K562 (cell line): ENCODE measurements at regions of chr11 and their contacts with region 1.

Region 1: DNA sequence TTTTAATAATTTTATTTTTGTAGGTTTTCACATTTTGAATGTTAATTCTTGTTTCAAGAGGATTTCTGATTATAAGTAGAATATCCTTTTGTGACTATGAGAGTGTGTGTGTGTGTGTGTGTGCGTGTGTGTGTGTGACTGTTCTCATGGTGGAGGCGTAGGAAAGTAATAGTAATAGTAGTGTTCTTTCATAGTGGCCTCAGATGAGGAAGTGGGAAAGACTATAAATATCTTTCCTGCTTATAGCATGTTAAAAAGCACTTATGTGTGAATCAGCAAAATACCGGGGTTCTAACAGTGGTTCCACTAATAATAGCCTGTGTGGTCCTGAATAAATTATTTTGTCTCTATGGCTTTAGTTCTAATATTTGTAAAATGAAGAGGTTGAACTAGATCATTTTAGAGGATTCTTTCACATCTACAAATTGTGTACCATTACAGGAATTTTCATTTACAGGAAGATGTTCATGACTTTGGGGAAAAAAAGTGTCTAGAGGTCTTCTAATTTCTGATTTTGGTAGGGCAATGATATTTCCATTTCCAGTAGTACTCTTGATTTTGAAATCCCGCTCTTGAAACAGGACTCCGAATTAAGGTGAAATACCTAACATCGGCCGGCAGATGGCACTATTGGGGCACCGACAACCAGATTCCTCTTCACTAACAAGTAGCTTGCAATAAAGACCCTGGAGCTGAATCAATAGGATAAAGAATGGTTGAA is 29.9 kb upstream of the OR10G7 start:
- DNase-seq: peak; percentile 49 to 87 (median 54)
- ATAC-seq: peak; percentile 28
- H3K4me3 ChIP-seq: no peak overlapping the region
- H3K27ac ChIP-seq: no peak overlapping the region
- H3K4me1 ChIP-seq: peaks cover 11 to 17% of the 10 kb centered on the region in 2 experiments; a peak in 4 of 5 replicates
- H3K27me3 ChIP-seq: peaks cover 4 to 13% of the 10 kb centered on the region in 2 experiments; a peak in 4 of 5 replicates
- CTCF ChIP-seq: peak; percentile 65 to 88 (median 80)
- EP300 ChIP-seq: no peak
- POLR2A ChIP-seq: no peak
- RAD21 ChIP-seq: peak; percentile 92

Region 2: DNA sequence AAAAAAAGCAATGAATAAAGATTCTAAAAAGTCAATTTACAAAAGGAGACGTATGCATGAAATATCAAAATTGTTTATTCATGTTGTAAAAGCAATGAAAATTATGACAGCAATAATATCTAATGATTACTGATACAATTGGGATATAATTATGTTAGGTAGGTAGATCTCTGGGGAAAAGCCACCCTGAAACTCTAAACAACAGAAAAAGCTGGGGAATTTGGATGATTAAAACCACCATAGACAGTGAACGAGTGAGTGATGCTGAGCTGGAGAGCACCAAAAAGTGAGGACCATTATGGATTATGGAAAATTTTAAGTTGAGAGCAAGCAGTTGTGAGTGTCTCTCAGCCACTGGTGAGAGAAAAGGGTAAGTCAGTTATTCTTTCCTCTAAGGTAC is 44.6 kb before region 1 on chr11 and contains the start of gene OR10G8:
- CTCF ChIA-PET with region 1: no interaction called
- POLR2A ChIA-PET with region 1: no interaction called
- in situ Hi-C with region 1: no loop called
- intact Hi-C with region 1: no loop called
- DNase-seq: no peak
- ATAC-seq: no peak
- H3K4me3 ChIP-seq: no peak within 1 kb of the TSS
- H3K27ac ChIP-seq: no peak within 1 kb of the TSS
- H3K4me1 ChIP-seq: no peaks in the 10 kb centered on the region
- H3K27me3 ChIP-seq: peaks cover 0 to 6% of the 10 kb centered on the region in 2 experiments; a peak in 1 of 5 replicates
- CTCF ChIP-seq: no peak
- EP300 ChIP-seq: no peak
- POLR2A ChIP-seq: no peak
- RAD21 ChIP-seq: no peak
- polyA plus RNA-seq, gene OR10G8: not detected

Region 3: GRCh38 chr11:124108156-124108555 is 37.1 kb after region 1 on chr11:
- CTCF ChIA-PET with region 1: interaction called, 5 read pairs
- POLR2A ChIA-PET with region 1: interaction called, 4 read pairs
- in situ Hi-C with region 1: no loop called
- intact Hi-C with region 1: loop called (anchors 2 kb)
- DNase-seq: peak; percentile 29 to 76 (median 46)
- ATAC-seq: peak; percentile 93
- H3K4me3 ChIP-seq: no peak overlapping the region
- H3K27ac ChIP-seq: no peak overlapping the region
- H3K4me1 ChIP-seq: no peaks in the 10 kb centered on the region; a peak in 1 of 5 replicates
- H3K27me3 ChIP-seq: no peaks in the 10 kb centered on the region
- CTCF ChIP-seq: peak; percentile 55 to 65 (median 62)
- EP300 ChIP-seq: 0 out of 2 replicates have a peak, but pooled peaks have one; percentile 15
- POLR2A ChIP-seq: no peak
- RAD21 ChIP-seq: peak; percentile 74 to 90

Region 4: GRCh38 chr11:124159481-124159880 is 88.4 kb after region 1 on chr11:
- CTCF ChIA-PET with region 1: no interaction called
- POLR2A ChIA-PET with region 1: no interaction called
- in situ Hi-C with region 1: no loop called
- intact Hi-C with region 1: no loop called
- DNase-seq: no peak
- ATAC-seq: no peak
- H3K4me3 ChIP-seq: no peak overlapping the region
- H3K27ac ChIP-seq: no peak overlapping the region
- H3K4me1 ChIP-seq: no peaks in the 10 kb centered on the region; a peak in 1 of 5 replicates
- H3K27me3 ChIP-seq: peaks cover 2 to 7% of the 10 kb centered on the region in 2 experiments; a peak in 2 of 5 replicates
- CTCF ChIP-seq: no peak
- EP300 ChIP-seq: no peak
- POLR2A ChIP-seq: no peak
- RAD21 ChIP-seq: no peak

Region 5: GRCh38 chr11:124277804-124278203 is 206.7 kb after region 1 on chr11:
- CTCF ChIA-PET with region 1: no interaction called
- POLR2A ChIA-PET with region 1: interaction called, 4 read pairs
- in situ Hi-C with region 1: no loop called
- intact Hi-C with region 1: loop called (anchors 5 kb)
- DNase-seq: no peak
- ATAC-seq: no peak
- H3K4me3 ChIP-seq: no peak overlapping the region
- H3K27ac ChIP-seq: no peak overlapping the region
- H3K4me1 ChIP-seq: peaks cover 6 to 13% of the 10 kb centered on the region in 2 experiments
- H3K27me3 ChIP-seq: no peaks in the 10 kb centered on the region
- CTCF ChIP-seq: peak in 2 of 3 experiments; percentile 3 to 30; a peak in 2 of 6 replicates
- EP300 ChIP-seq: no peak
- POLR2A ChIP-seq: no peak
- RAD21 ChIP-seq: peak; percentile 6 to 44; a peak in 2 of 4 replicates

Region 6: GRCh38 chr11:124402326-124402922 is 331.3 kb after region 1 on chr11:
- CTCF ChIA-PET with region 1: no interaction called
- POLR2A ChIA-PET with region 1: no interaction called
- in situ Hi-C with region 1: loop called (anchors 10 kb)
- intact Hi-C with region 1: loop called (anchors 5 kb)
- DNase-seq: peak; percentile 58 to 80 (median 64)
- ATAC-seq: peak; percentile 97
- H3K4me3 ChIP-seq: no peak overlapping the region
- H3K27ac ChIP-seq: no peak overlapping the region
- H3K4me1 ChIP-seq: no peaks in the 10 kb centered on the region
- H3K27me3 ChIP-seq: no peaks in the 10 kb centered on the region
- CTCF ChIP-seq: peak; percentile 75 to 79 (median 78)
- EP300 ChIP-seq: no peak
- POLR2A ChIP-seq: no peak
- RAD21 ChIP-seq: peak; percentile 49 to 74

Region 7: GRCh38 chr11:124481365-124482323 is 410.6 kb after region 1 on chr11:
- CTCF ChIA-PET with region 1: no interaction called
- POLR2A ChIA-PET with region 1: no interaction called
- in situ Hi-C with region 1: no loop called
- intact Hi-C with region 1: loop called (anchors 5 kb)
- DNase-seq: peak; percentile 28 to 81 (median 58)
- ATAC-seq: peak; percentile 98
- H3K4me3 ChIP-seq: peak overlapping the region; percentile 34
- H3K27ac ChIP-seq: peak overlapping the region; percentile 79
- H3K4me1 ChIP-seq: peaks cover 5 to 17% of the 10 kb centered on the region in 2 experiments
- H3K27me3 ChIP-seq: no peaks in the 10 kb centered on the region
- CTCF ChIP-seq: 0 out of 6 replicates have a peak, but pooled peaks of 1 of the 3 experiments have one; percentile 4
- EP300 ChIP-seq: no peak
- POLR2A ChIP-seq: peak; percentile 64
- RAD21 ChIP-seq: 0 out of 4 replicates have a peak, but pooled peaks of 1 of the 2 experiments have one; percentile 10

Region 8: DNA sequence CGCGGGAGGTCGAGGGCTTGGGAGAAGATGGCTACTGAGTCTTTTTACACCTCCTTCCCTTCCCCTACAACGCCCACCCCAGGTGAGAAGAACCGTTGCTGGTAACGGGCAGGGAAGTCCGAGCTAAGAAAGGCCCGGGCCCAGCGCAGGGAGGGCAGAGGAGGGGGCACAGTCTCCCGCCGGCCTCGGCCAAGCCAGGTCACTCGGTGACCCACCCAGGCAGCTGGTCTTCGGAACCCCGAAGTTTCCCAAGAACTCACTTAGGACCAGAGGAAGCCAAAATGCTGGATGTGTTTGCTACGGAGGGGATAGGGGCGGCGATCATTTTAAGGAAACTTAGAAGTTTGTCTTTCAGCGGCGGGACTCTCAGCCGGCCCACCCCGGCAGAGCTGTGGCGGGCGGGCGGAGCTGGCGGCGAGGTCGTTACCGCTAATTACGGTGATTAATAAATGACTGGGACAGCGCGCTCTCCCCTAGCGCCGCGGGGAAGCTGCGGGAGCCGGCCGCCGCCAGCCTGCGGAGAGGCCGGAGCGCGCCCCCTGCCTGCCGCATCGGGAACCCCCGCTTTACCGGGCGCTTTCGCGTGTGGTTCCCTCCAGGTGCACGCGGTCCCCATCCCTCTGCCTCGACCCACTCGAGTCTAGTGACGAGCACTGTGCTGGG is 795.0 kb after region 1 on chr11:
- CTCF ChIA-PET with region 1: no interaction called
- POLR2A ChIA-PET with region 1: no interaction called
- in situ Hi-C with region 1: loop called (anchors 25 kb)
- intact Hi-C with region 1: loop called (anchors 10 kb)
- DNase-seq: peak; percentile 58 to 85 (median 84)
- ATAC-seq: peak; percentile 91
- H3K4me3 ChIP-seq: no peak overlapping the region
- H3K27ac ChIP-seq: no peak overlapping the region; the same call in 2 of the 3 replicates
- H3K4me1 ChIP-seq: peaks cover 5 to 22% of the 10 kb centered on the region in 2 experiments; a peak in 2 of 5 replicates
- H3K27me3 ChIP-seq: peaks cover 30 to 82% of the 10 kb centered on the region in 2 experiments
- CTCF ChIP-seq: peak; percentile 70 to 84 (median 82)
- EP300 ChIP-seq: no peak
- POLR2A ChIP-seq: no peak
- RAD21 ChIP-seq: peak; percentile 40 to 68